Left ventricle myocardium superior (tissue), 1 donor: ENCODE measurements at regions of chr13 and their contacts with region 1.

Region 1: DNA sequence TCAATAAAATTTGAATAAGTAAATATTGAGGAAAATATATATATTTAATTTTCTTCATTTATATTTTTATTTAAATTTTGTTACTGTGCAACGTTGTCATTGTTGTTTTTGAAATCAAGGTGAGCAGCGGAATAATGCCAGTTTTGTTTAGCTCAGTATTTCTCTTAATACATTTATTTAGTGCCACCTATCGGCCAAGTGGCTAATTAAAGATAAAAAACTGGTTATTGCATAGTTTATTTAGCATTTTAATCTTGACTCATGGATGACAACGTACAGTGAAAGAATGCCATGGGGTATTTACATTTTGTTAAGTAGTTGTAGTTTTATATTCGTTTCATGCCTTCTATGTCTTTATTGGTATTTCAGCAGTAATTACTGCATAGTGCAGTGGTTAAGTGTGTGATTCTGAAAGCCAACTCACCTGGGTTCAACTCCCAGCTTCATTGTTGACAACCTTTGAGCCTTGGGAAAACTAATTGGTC is 265.9 kb downstream of the MYO16 start:
- DNase-seq: no peak
- ATAC-seq: no peak

Region 2: GRCh38 chr13:108342369-108343289 is 552.6 kb before region 1 on chr13:
- intact Hi-C with region 1: loop called (anchors 10 kb)
- DNase-seq: no peak
- ATAC-seq: peak; percentile 46

Region 3: GRCh38 chr13:108609353-108609752 is 285.9 kb before region 1 on chr13:
- intact Hi-C with region 1: loop called (anchors 5 kb)
- DNase-seq: no peak
- ATAC-seq: peak; percentile 79